ENCODE measurements at regions of chr15 and their contacts with region 1.

Region 1: DNA sequence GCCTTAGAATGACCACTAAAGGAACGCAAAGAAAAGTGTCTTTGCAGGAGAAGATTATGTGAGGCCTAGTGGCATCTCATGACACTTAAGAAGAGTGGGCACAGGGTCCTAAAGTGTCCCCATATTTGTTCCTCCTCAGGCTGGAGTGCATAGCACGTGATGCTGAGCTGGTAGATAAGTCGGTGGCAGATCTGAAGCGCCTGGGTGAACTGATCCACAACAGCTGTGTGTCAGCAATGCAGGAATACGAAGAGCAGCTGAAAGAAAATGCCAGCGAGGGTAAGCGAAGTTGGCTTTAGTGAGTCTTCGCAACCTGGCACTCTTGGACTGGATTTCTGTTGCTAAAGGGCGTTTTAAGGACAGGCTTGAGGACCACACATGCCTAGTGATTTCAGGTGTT is 92.6 kb downstream of the CHD2 start:
- DNase-seq: no peak
- ATAC-seq: no peak
- H3K4me3 ChIP-seq: no peak overlapping the region
- H3K4me3 Mint-ChIP-seq: no peak overlapping the region
- H3K27ac ChIP-seq: no peak overlapping the region
- H3K27ac Mint-ChIP-seq: peak overlapping the region in 8 of 9 donors; percentile 8 to 71 (median 30)
- H3K4me1 ChIP-seq: no peaks in the 10 kb centered on the region
- H3K4me1 Mint-ChIP-seq: peaks cover 8 to 55% (median 36%) of the 10 kb centered on the region in 7 donors
- H3K27me3 ChIP-seq: no peaks in the 10 kb centered on the region
- H3K27me3 Mint-ChIP-seq: no peaks in the 10 kb centered on the region

Region 2: GRCh38 chr15:93012786-93013185 is 20.1 kb after region 1 on chr15:
- CTCF ChIA-PET with region 1: no interaction called
- POLR2A ChIA-PET with region 1: interaction called, 4 read pairs
- intact Hi-C with region 1: loop called in 1 of 2 experiments (anchors 2 kb)
- DNase-seq: no peak
- ATAC-seq: no peak
- H3K4me3 ChIP-seq: no peak overlapping the region
- H3K4me3 Mint-ChIP-seq: no peak overlapping the region
- H3K27ac ChIP-seq: no peak overlapping the region
- H3K27ac Mint-ChIP-seq: peak overlapping the region in 6 of 9 donors; percentile 12 to 76 (median 36)
- H3K4me1 ChIP-seq: no peaks in the 10 kb centered on the region
- H3K4me1 Mint-ChIP-seq: peaks cover 2 to 19% (median 13%) of the 10 kb centered on the region in 7 donors
- H3K27me3 ChIP-seq: no peaks in the 10 kb centered on the region
- H3K27me3 Mint-ChIP-seq: no peaks in the 10 kb centered on the region